Mammary epithelial cell (primary cell): ENCODE measurements at regions of chr6 and their contacts with region 1.

Region 1: DNA sequence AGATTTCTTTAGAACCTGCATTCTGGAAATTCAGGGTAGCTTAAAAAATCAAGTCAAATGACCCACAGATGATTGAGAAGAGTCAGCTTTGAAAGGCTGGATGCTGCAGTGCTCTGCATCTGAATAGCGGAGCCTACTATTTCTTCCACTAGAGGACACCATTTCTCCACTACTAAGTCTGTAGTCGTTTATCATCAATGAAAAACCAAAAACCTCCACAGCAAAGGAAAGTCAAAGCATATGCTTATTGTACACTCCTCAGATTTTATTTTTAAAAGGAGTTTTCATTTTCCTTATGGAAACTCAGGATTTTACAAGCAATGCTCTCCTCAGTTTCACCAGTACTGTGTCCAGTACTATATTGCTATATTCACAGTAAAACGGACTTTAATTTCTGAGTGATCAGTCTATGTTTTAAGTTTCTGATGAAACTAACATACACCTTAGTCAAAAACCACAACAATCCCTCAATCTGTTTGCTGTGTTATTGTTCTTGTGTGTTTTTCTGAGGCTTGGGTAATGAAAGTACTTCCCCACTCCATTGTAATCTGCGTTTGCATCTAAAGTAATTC is 50.5 kb upstream of the ENPP5 start:
- DNase-seq: peak; percentile 21
- H3K4me3 ChIP-seq: no peak overlapping the region
- H3K27ac ChIP-seq: no peak overlapping the region
- H3K4me1 ChIP-seq: no peaks in the 10 kb centered on the region
- H3K27me3 ChIP-seq: peaks cover 2% of the 10 kb centered on the region
- CTCF ChIP-seq: peak; percentile 83 to 88

Region 2: GRCh38 chr6:46410334-46410953 is 189.1 kb after region 1 on chr6:
- CTCF ChIA-PET with region 1: no interaction called
- dilution Hi-C with region 1: no loop called
- in situ Hi-C with region 1: loop called in 1 of 2 experiments (anchors 5 kb)
- intact Hi-C with region 1: loop called (anchors 1 kb)
- DNase-seq: peak; percentile 27
- H3K4me3 ChIP-seq: no peak overlapping the region
- H3K27ac ChIP-seq: no peak overlapping the region
- H3K4me1 ChIP-seq: no peaks in the 10 kb centered on the region
- H3K27me3 ChIP-seq: peaks cover 5% of the 10 kb centered on the region
- CTCF ChIP-seq: peak; percentile 40 to 69

Region 3: GRCh38 chr6:46626228-46626909 is 405.1 kb after region 1 on chr6:
- CTCF ChIA-PET with region 1: no interaction called
- dilution Hi-C with region 1: no loop called
- in situ Hi-C with region 1: no loop called
- intact Hi-C with region 1: loop called (anchors 1 kb)
- DNase-seq: peak; percentile 31
- H3K4me3 ChIP-seq: no peak overlapping the region
- H3K27ac ChIP-seq: no peak overlapping the region
- H3K4me1 ChIP-seq: no peaks in the 10 kb centered on the region
- H3K27me3 ChIP-seq: no peaks in the 10 kb centered on the region
- CTCF ChIP-seq: peak; percentile 62 to 66